Thyroid gland (tissue), 4 donors: ENCODE measurements at regions of chr4 and their contacts with region 1.

Region 1: DNA sequence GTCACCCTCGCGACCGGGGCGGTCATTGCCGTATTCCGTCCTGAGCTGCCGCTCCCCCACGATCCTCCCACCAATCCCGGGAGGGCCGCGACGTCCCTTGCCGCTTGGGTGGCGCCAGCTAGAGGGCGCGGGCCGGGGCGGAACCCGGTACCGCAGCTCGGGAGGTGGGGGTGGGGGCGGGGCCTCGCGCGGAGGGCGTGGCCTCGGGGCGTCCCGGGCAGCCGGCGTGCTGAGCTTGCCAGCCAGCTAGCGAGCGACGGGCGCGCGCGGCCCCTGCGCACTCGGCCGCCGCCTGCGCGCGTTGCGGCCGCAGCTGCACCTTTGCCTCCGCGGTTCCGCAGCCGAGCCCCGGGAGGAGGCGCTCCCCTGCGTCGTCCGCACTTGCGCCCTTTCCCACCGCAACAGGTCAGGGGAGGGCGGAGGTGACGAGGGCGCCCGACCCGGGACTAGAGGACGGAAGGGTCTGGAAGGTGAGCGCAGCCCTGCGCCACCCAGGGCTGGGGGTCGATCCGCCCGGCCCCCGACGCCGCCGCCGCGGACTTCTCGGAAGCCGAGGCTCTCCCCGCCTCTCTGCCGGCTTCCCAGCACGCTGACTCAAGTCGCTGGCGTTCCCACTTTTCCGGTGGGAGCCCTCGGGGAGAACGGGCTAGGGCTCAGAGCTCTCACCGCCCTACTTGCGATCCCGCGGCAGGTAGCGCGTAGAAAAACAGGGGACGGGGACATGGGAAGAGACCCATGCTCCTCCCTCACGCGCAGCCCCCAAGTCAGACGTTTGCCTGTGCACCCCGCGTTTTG is at the start of gene AFF1:
- DNase-seq: peak; percentile 96 to 97
- H3K4me3 ChIP-seq: peak within 1 kb of the TSS; percentile 71 to 96 (median 89)
- H3K27ac ChIP-seq: peak within 1 kb of the TSS; percentile 92 to 97 (median 96)
- H3K4me1 ChIP-seq: peaks cover 26 to 35% of the 10 kb centered on the region in 2 donors
- H3K27me3 ChIP-seq: no peaks in the 10 kb centered on the region
- CTCF ChIP-seq: peak in 3 of 6 experiments; percentile 23 to 57 (median 34)
- POLR2A ChIP-seq: peak in 1 of 2 donors; percentile 98
- total RNA-seq, gene AFF1: 155 to 238 (median 192) TPM

Region 2: GRCh38 chr4:86908251-86908657 is 26.7 kb before region 1 on chr4:
- intact Hi-C with region 1: no loop called
- DNase-seq: no peak
- H3K4me3 ChIP-seq: no peak overlapping the region
- H3K27ac ChIP-seq: peak overlapping the region; percentile 74 to 94 (median 83)
- H3K4me1 ChIP-seq: peaks cover 17 to 24% of the 10 kb centered on the region in 2 donors
- H3K27me3 ChIP-seq: no peaks in the 10 kb centered on the region
- CTCF ChIP-seq: no peak
- POLR2A ChIP-seq: no peak

Region 3: GRCh38 chr4:86993909-86994681 is 59.1 kb after region 1 on chr4:
- intact Hi-C with region 1: loop called (anchors 5 kb)
- DNase-seq: peak; percentile 34 to 38
- H3K4me3 ChIP-seq: no peak overlapping the region
- H3K27ac ChIP-seq: peak overlapping the region; percentile 37 to 67 (median 61)
- H3K4me1 ChIP-seq: peaks cover 45 to 47% of the 10 kb centered on the region in 2 donors
- H3K27me3 ChIP-seq: no peaks in the 10 kb centered on the region
- CTCF ChIP-seq: no peak
- POLR2A ChIP-seq: no peak

Region 4: DNA sequence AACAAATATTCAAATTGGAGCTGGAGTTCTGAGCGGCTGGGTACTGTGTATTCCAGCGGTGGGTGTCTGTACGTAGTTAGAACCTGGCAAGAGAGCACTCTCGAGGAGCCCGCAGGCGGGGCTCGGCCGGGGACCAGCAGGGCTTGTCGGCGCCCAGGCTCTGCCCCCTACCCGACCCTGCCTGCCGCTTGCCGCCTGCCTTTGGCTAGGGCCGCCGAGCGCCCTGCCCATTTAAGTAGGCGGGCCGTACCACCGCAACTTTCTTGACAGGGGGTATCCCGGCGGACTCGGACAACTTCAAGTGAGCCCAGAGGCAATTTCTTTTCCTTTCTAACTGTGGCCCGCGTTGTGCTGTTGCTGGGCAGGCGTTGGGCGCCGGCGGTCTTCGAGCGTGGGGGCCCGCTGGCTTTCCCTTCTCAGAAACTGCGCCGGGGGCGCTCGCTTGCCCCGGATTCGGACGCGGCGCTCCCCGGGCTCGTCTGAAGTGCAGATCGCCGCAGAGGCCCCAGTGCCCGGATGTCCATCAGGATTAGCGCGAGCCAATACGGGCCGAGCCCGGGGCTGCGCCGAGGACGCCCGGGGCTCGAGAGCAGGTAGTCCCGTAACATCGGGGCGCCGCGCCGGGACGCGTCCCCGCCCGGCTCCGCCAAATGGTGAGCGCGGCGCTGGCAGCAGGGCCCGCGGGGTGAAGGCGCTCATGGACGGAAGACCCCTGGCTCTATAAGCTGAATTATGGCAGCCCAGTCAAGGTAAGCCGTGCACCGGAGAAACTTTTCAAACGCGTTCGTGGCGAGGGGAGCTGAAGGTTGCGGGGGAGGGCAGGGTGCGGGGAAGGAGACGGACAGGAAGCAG is 71.9 kb after region 1 on chr4:
- intact Hi-C with region 1: loop called (anchors 5 kb)
- DNase-seq: peak; percentile 95
- H3K4me3 ChIP-seq: peak overlapping the region; percentile 50 to 91 (median 77)
- H3K27ac ChIP-seq: peak overlapping the region; percentile 96 to 97 (median 97)
- H3K4me1 ChIP-seq: peaks cover 41 to 49% of the 10 kb centered on the region in 2 donors
- H3K27me3 ChIP-seq: no peaks in the 10 kb centered on the region
- CTCF ChIP-seq: peak in 3 of 6 experiments; percentile 11 to 37 (median 31)
- POLR2A ChIP-seq: peak; percentile 97 to 99